T-cell (primary cell): ENCODE measurements at regions of chr3 and their contacts with region 1.

Region 1: DNA sequence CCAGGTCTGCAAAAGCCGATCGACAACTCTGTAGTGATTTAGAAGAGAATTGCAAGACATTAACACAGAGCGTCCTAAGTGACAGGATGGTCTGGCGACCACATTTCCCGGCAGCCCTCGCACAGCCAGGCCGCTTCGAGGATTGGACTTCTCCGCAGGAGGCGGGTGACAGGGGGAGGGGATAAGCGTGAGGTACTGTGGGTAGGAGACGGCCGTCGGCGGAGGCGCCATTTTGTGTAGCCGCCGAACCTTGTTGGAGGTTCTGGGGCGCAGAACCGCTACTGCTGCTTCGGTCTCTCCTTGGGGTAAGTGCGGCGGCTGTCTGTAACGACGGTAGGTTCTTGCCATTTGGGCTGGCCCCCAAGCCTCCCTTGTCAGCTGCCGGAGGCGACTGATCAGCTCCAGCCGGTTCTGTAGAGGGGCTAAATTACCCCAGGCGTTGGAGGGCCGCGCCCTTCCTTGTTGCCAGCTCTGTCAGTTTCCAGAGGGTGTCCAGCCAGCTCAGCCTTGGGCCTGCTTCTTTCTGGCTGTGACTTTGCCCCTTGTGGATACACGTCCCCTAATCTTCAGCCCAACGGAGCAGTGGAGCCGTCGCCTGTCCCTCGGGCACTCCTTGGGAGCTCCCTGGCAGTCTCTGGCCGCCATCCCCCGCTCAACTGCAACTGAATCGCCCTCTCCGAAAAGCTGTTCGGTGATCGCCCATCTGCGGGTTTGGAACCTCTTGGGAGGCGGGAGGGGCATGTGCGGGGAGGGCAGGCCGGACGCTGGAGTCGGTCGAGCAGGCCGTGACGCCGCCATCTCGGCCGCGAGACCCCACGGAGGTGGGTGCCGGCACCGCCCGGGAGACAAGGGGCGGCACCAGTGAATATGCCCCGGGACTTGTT is at the start of gene RBM5:
- DNase-seq: peak; percentile 79 to 95 (median 90)
- ATAC-seq: peak; percentile 100
- H3K4me3 ChIP-seq: peak within 1 kb of the TSS; percentile 83 to 85
- H3K4me3 Mint-ChIP-seq: peak within 1 kb of the TSS; percentile 96 to 97 (median 97)
- H3K27ac ChIP-seq: peak within 1 kb of the TSS; percentile 83
- H3K27ac Mint-ChIP-seq: peak within 1 kb of the TSS; percentile 94 to 96
- H3K4me1 ChIP-seq: peaks cover 11 to 21% of the 10 kb centered on the region in 2 experiments
- H3K4me1 Mint-ChIP-seq: peaks cover 30 to 35% (median 32%) of the 10 kb centered on the region in 3 donors
- H3K27me3 ChIP-seq: no peaks in the 10 kb centered on the region
- H3K27me3 Mint-ChIP-seq: no peaks in the 10 kb centered on the region
- total RNA-seq, gene RBM5: 293 to 354 (median 316) TPM

Region 2: DNA sequence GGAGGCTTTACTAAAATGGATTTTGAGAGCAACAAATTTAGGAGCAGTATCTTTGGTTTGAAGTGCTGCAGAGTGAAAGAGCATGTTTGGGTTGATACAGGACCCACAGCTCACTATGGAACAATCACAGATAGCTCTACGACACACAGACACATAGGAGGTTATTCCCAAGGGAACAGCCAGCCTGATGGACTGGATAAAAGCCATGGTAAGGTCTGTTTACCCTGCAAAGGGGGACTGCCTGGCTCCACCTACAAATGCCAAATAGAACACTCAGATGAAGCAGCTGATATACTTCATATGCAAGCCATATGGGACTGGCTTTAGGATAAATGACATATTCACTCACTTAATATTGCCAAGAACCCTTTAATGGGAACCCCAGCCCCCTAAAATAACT is 1976.2 kb before region 1 on chr3:
- CTCF ChIA-PET with region 1: no interaction called
- POLR2A ChIA-PET with region 1: no interaction called
- DNase-seq: no peak
- ATAC-seq: no peak
- H3K4me3 ChIP-seq: no peak overlapping the region
- H3K4me3 Mint-ChIP-seq: peak overlapping the region in 2 of 3 donors; percentile 29 to 47
- H3K27ac ChIP-seq: peak overlapping the region; percentile 69
- H3K27ac Mint-ChIP-seq: peak overlapping the region; percentile 79 to 88
- H3K4me1 ChIP-seq: peaks cover 4 to 16% of the 10 kb centered on the region in 2 experiments
- H3K4me1 Mint-ChIP-seq: peaks cover 9 to 13% (median 9%) of the 10 kb centered on the region in 3 donors
- H3K27me3 ChIP-seq: no peaks in the 10 kb centered on the region
- H3K27me3 Mint-ChIP-seq: no peaks in the 10 kb centered on the region

Region 3: GRCh38 chr3:49955636-49956035 is 133.3 kb before region 1 on chr3:
- CTCF ChIA-PET with region 1: no interaction called
- POLR2A ChIA-PET with region 1: interaction called in 1 of 2 experiments, 12 read pairs
- DNase-seq: no peak
- ATAC-seq: no peak
- H3K4me3 ChIP-seq: no peak overlapping the region
- H3K4me3 Mint-ChIP-seq: no peak overlapping the region
- H3K27ac ChIP-seq: no peak overlapping the region
- H3K27ac Mint-ChIP-seq: no peak overlapping the region
- H3K4me1 ChIP-seq: peaks cover 0 to 9% of the 10 kb centered on the region in 2 experiments
- H3K4me1 Mint-ChIP-seq: peaks cover 28 to 37% (median 32%) of the 10 kb centered on the region in 3 donors
- H3K27me3 ChIP-seq: no peaks in the 10 kb centered on the region
- H3K27me3 Mint-ChIP-seq: no peaks in the 10 kb centered on the region